ENCODE measurements at regions of chr3 and their contacts with region 1.

Region 1: DNA sequence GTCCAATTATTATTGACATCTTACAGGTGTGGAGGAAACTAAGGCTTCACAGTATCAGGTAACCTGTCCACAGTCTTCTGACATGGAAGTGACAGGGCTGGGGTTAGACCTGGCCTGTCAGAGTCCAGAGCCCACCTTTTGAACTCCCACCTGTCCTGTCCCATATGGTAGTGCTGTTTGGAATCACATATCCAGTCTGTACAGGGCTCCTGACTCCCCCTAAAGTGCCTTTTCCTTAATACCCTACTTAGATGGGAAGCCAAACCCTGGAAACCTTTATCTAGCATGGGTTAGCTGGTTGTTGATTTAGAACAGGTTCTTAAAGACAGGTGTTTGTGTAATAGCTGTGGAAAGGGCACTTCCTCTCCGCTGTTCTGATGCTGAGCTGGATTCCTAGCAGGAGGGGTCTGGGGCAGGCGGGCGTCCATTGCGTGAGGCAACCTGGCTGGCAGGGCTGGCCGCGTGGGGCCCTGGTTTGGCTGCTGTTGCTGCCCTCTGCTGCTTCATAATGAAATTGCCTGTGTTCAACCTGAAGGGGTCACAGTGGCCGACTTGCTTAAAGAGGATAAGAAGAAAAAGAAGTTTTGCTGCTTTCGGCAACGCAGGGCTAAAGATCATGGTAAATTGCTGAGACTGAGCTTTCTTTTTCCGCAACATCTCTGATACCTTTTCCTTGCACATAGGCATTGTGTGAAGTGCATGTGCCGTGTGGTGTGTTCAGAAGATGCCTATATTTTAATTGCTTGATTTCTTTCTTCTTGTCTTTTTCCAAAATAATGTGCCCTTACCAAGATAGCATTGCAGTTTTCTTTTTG is 136.2 kb downstream of the CHDH start:
- DNase-seq: peak; percentile 73
- ATAC-seq: peak; percentile 86
- H3K4me3 Mint-ChIP-seq: no peak overlapping the region
- H3K27ac Mint-ChIP-seq: no peak overlapping the region
- H3K4me1 Mint-ChIP-seq: peaks cover 19% of the 10 kb centered on the region
- H3K27me3 Mint-ChIP-seq: peaks cover 10% of the 10 kb centered on the region

Region 2: GRCh38 chr3:53677413-53677812 is 32.7 kb before region 1 on chr3:
- CTCF ChIA-PET with region 1: interaction called, 23 read pairs
- DNase-seq: no peak
- ATAC-seq: no peak
- H3K4me3 Mint-ChIP-seq: no peak overlapping the region
- H3K27ac Mint-ChIP-seq: no peak overlapping the region
- H3K4me1 Mint-ChIP-seq: no peaks in the 10 kb centered on the region
- H3K27me3 Mint-ChIP-seq: peaks cover 56% of the 10 kb centered on the region

Measured in activated CD8-positive, alpha-beta memory T cell treated with anti-CD3 and anti-CD28 coated beads, Interleukin-2, amount 10 ng/mL, durations not matched to agents 7 days and 5 days (primary cell).